ENCODE measurements at regions of chr18 and their contacts with region 1.

Region 1: GRCh38 chr18:62721839-62722795 is 6.8 kb downstream of the PHLPP1 start:
- DNase-seq: no peak

Region 2: GRCh38 chr18:62771494-62772270 is 49.6 kb after region 1 on chr18:
- intact Hi-C with region 1: loop called (anchors 5 kb)
- DNase-seq: no peak

Measured in cardiac septum (tissue), 1 donor.